ENCODE measurements at regions of chr7 and their contacts with region 1.

Region 1: DNA sequence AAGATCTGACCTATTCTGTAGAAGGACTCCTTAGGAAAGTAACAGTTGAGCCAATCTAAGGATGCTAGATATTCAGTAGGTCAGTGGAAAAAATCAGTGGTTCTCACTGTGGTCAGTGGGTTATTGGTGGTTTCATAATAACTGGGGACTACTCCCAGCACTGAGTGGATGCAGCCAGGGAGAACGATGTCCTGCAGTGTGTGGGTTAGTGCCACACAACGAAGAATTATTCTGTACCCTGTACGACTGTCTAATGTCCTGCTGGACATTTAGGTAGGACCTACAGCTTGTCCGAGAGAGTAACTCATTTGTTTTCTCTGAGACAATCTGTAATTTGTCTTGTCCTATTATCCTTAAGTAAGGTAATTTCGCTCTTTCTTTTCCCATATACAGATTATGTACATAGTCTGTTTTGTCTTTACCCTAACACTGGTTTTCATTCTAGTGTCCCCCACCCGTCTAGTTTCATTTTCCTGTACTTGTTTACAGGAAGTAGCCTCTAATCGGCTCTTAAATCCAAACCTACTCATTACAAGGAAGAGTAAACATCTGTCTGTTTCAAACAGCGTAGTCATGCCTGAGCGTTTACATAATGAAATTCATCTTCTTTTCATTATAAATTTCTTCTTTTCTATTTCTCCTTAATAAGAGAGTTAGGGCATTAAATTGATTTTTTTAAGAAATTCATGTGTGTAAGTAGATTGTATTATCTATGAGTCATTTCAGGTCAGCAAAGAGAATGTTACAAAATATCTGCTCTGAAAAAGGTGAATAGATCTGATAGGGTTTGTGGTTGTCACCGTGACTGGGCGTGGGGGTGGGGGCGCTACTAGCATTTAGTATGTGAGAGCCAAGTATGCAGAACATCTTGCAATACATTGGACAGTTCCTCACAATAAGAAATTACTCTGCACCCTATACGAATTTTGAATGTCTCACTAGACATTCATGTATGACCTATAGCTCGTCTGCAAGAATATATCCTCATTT is 8.3 kb upstream of the ZC3HAV1L start:
- DNase-seq: peak; percentile 60 to 92 (median 68)
- H3K4me3 ChIP-seq: no peak overlapping the region
- H3K4me3 Mint-ChIP-seq: peak overlapping the region in 6 of 8 donors; percentile 51 to 77 (median 65)
- H3K27ac ChIP-seq: peak overlapping the region; percentile 15
- H3K27ac Mint-ChIP-seq: peak overlapping the region; percentile 57 to 93 (median 86)
- H3K4me1 ChIP-seq: peaks cover 61% of the 10 kb centered on the region
- H3K4me1 Mint-ChIP-seq: peaks cover 47 to 81% (median 61%) of the 10 kb centered on the region in 4 donors
- H3K27me3 ChIP-seq: no peaks in the 10 kb centered on the region
- H3K27me3 Mint-ChIP-seq: no peaks in the 10 kb centered on the region

Region 2: GRCh38 chr7:139058943-139059342 is 14.8 kb after region 1 on chr7:
- CTCF ChIA-PET with region 1: interaction called, 16 read pairs
- POLR2A ChIA-PET with region 1: interaction called, 5 read pairs
- intact Hi-C with region 1: loop called (anchors 2 kb)
- DNase-seq: no peak
- H3K4me3 ChIP-seq: no peak overlapping the region
- H3K4me3 Mint-ChIP-seq: no peak overlapping the region
- H3K27ac ChIP-seq: no peak overlapping the region
- H3K27ac Mint-ChIP-seq: peak overlapping the region in 5 of 7 donors; percentile 10 to 86 (median 70)
- H3K4me1 ChIP-seq: peaks cover 45% of the 10 kb centered on the region
- H3K4me1 Mint-ChIP-seq: peaks cover 36 to 50% (median 42%) of the 10 kb centered on the region in 4 donors
- H3K27me3 ChIP-seq: no peaks in the 10 kb centered on the region
- H3K27me3 Mint-ChIP-seq: no peaks in the 10 kb centered on the region

Region 3: GRCh38 chr7:139230774-139231512 is 186.8 kb after region 1 on chr7 and contains the start of gene UBN2:
- CTCF ChIA-PET with region 1: no interaction called
- POLR2A ChIA-PET with region 1: no interaction called
- intact Hi-C with region 1: no loop called
- DNase-seq: peak; percentile 79 to 90 (median 80)
- H3K4me3 ChIP-seq: peak within 1 kb of the TSS; percentile 79 to 96
- H3K4me3 Mint-ChIP-seq: peak within 1 kb of the TSS; percentile 98 to 100 (median 100)
- H3K27ac ChIP-seq: peak within 1 kb of the TSS; percentile 74
- H3K27ac Mint-ChIP-seq: peak within 1 kb of the TSS; percentile 96 to 100 (median 98)
- H3K4me1 ChIP-seq: peaks cover 19% of the 10 kb centered on the region
- H3K4me1 Mint-ChIP-seq: peaks cover 10 to 36% (median 24%) of the 10 kb centered on the region in 4 donors
- H3K27me3 ChIP-seq: no peaks in the 10 kb centered on the region
- H3K27me3 Mint-ChIP-seq: no peaks in the 10 kb centered on the region
- total RNA-seq, gene UBN2: 23.6 to 26.7 TPM